Caco-2 (cell line): ENCODE measurements at regions of chr10 and their contacts with region 1.

Region 1: DNA sequence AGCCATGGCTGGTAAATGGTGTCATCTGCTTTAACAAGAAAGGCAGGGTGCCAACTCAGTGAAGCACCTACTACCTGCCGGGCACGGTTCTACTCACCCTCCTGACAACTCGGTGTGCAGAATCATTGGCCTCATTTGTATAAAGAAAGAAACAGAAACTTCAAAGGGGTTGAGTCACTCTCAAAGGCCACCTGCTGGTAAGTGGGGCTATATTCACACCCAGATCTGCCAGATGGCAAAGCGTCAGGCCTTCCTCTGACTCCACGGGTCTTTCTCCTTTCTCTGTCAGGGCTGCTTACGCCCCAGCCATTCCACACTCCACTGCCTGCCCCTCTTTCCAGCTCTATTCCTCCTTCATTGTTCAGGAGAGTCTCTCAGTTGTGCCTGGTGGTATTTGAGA is 309.2 kb downstream of the GFRA1 start:
- DNase-seq: peak in 1 of 2 experiments; percentile 12
- H3K4me3 ChIP-seq: no peak overlapping the region
- H3K4me3 Mint-ChIP-seq: no peak overlapping the region
- H3K27ac Mint-ChIP-seq: no peak overlapping the region
- H3K4me1 ChIP-seq: no peaks in the 10 kb centered on the region
- H3K4me1 Mint-ChIP-seq: peaks cover 6% of the 10 kb centered on the region
- H3K27me3 ChIP-seq: no peaks in the 10 kb centered on the region
- H3K27me3 Mint-ChIP-seq: no peaks in the 10 kb centered on the region
- CTCF ChIP-seq: peak; percentile 20

Region 2: DNA sequence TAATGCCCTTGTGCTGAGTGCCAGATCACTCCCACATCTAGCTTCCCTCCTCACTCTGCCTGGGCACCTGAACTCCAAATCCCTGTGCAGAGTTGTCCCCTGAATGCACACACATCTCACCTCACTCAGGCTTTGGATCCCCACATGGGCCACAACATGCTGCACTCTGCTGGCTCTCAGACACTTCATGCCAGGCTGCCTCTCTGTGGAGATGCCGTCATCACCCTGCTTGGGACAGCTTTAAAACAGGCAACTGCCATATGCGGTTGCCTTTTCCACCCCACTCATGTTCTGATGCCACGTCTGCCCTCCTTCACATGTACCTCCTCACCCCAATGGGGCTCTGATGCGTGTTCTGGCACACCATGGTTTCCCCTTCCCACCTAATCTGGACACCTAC is 167.9 kb before region 1 on chr10:
- CTCF ChIA-PET with region 1: no interaction called
- POLR2A ChIA-PET with region 1: no interaction called
- intact Hi-C with region 1: loop called (anchors 5 kb)
- DNase-seq: no peak
- H3K4me3 ChIP-seq: no peak overlapping the region
- H3K4me3 Mint-ChIP-seq: no peak overlapping the region
- H3K27ac Mint-ChIP-seq: no peak overlapping the region
- H3K4me1 ChIP-seq: no peaks in the 10 kb centered on the region
- H3K4me1 Mint-ChIP-seq: no peaks in the 10 kb centered on the region
- H3K27me3 ChIP-seq: no peaks in the 10 kb centered on the region
- H3K27me3 Mint-ChIP-seq: peaks cover 7% of the 10 kb centered on the region
- CTCF ChIP-seq: no peak

Region 3: DNA sequence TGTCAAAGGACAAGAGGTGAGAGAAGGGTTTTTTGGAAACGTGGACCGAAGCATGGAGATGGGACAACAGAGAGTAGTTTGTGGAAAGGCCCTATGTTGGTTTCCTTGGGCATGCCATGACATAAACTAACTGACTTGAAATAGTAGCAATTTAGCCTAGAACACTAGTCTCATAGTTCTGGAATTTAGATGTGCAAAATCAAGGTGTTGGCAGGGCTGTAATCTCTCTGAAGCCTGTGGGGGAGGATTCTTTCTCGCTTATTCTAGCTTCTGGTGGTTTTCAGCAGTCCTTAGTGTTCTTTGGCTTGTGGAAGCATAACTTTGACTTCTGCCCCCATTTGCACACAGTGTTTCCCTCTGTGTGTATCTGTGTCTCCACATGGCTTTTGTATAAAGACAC is 25.8 kb after region 1 on chr10:
- CTCF ChIA-PET with region 1: no interaction called
- POLR2A ChIA-PET with region 1: no interaction called
- intact Hi-C with region 1: no loop called
- DNase-seq: no peak
- H3K4me3 ChIP-seq: no peak overlapping the region
- H3K4me3 Mint-ChIP-seq: no peak overlapping the region
- H3K27ac Mint-ChIP-seq: no peak overlapping the region
- H3K4me1 ChIP-seq: no peaks in the 10 kb centered on the region
- H3K4me1 Mint-ChIP-seq: no peaks in the 10 kb centered on the region
- H3K27me3 ChIP-seq: no peaks in the 10 kb centered on the region
- H3K27me3 Mint-ChIP-seq: no peaks in the 10 kb centered on the region
- CTCF ChIP-seq: no peak